HEK293 (cell line): ENCODE measurements at regions of chr7 and their contacts with region 1.

Region 1: DNA sequence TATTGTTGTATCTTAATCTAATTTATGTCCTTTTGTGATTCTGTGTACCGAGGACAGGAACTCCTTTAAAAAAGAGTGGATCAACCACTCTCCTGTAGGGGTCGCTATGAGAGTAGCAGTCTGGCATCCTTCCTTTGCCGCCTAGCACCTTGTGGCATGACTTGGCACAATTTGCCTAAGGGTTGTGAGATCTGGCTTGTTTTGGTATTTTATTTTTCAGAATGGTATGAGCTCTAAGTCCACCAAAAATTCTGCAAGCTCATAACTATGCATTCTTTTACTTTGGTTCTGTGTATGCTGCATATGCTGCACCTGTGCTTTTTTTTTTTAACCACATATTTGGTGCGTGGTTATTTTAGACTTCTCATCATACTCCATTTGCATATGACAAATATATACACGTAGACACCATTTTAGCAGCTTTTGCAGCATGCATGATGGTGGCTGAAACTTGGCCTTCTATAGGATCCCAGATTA is 112.8 kb downstream of the CDK14 start:
- H3K4me3 ChIP-seq: no peak overlapping the region
- H3K27ac ChIP-seq: no peak overlapping the region
- H3K4me1 ChIP-seq: peaks cover 24% of the 10 kb centered on the region
- CTCF ChIP-seq: peak; percentile 39; the same call in 1 of the 2 replicates

Region 2: DNA sequence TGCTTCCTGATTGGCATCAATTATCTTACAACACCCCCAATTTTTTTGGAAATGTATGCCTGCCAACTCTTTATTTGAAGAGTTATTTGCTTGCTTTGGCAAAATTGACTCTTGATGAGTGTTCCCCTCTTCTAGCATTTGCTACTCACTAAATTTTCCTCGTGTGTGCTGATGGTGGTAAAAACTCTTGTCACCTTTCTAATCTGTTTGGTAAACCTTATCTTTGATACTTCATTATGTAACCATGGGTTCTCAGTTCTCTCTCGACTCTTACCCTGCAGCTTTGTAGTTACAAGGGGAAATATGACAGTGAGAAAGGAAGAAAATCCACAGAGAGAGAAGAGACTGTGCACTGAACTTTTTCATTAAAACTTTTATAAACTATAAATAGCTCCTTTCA is 10.3 kb before region 1 on chr7:
- CTCF ChIA-PET with region 1: interaction called, 12 read pairs
- POLR2A ChIA-PET with region 1: no interaction called
- H3K4me3 ChIP-seq: no peak overlapping the region
- H3K27ac ChIP-seq: no peak overlapping the region
- H3K4me1 ChIP-seq: peaks cover 7% of the 10 kb centered on the region
- CTCF ChIP-seq: no peak

Region 3: DNA sequence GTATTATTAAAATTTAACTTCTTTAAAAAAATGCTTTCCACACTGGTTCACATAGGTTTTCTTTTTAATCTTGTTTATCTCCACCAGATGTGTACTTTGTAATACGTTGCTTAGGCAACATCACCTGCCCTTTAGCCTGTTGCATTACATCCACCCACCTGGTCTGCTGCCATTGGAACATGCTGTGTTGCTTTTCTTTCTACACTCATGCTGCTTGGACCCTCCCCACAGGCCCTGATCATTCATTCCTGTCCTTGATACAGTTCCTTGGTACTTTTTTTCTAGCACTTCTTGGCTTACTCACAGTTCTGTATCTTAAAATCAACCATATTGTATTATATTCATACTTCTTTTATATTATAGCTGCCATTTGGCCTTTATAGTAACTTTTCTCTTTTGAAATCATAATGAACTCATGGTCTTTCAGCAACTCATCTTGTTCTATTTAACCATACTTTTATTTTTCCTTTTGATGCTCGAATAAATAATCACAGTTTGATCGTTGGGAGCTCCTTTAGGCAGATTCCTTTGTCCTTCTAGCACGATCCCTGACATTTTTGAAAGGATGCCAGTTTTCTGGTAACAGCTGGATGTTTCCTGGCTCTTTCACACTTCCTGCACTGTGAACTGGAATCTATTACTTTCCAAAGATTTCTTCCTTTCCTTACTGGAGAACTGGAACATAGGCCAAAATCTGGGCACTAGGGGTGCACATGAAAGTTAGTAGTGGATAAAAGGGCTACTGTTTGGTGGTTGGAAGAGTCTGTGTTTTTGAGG is 12.3 kb after region 1 on chr7:
- CTCF ChIA-PET with region 1: interaction called, 20 read pairs
- POLR2A ChIA-PET with region 1: no interaction called
- H3K4me3 ChIP-seq: no peak overlapping the region
- H3K27ac ChIP-seq: no peak overlapping the region
- H3K4me1 ChIP-seq: peaks cover 11% of the 10 kb centered on the region
- CTCF ChIP-seq: no peak

Region 4: DNA sequence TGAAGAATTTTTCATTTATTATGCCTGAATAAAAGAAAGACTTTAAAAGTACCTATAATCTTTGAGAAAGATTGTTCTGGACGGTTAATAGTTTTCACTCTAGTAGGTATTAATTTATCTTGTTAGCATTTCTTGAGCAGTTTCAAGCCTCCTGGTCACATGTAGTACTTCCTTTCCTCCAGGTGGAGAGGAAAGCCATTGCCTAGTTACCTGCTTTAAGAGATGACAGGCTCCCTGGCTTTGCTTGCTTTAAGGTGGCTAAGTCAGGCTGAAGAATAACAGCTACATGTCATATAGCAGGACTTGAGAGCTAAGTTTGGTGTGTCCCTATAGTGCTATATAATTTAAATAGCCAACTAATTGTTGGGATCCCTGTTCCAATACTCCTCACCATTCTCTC is 47.5 kb after region 1 on chr7:
- CTCF ChIA-PET with region 1: no interaction called
- POLR2A ChIA-PET with region 1: no interaction called
- H3K4me3 ChIP-seq: no peak overlapping the region
- H3K27ac ChIP-seq: no peak overlapping the region
- H3K4me1 ChIP-seq: peaks cover 14% of the 10 kb centered on the region
- CTCF ChIP-seq: no peak

Region 5: DNA sequence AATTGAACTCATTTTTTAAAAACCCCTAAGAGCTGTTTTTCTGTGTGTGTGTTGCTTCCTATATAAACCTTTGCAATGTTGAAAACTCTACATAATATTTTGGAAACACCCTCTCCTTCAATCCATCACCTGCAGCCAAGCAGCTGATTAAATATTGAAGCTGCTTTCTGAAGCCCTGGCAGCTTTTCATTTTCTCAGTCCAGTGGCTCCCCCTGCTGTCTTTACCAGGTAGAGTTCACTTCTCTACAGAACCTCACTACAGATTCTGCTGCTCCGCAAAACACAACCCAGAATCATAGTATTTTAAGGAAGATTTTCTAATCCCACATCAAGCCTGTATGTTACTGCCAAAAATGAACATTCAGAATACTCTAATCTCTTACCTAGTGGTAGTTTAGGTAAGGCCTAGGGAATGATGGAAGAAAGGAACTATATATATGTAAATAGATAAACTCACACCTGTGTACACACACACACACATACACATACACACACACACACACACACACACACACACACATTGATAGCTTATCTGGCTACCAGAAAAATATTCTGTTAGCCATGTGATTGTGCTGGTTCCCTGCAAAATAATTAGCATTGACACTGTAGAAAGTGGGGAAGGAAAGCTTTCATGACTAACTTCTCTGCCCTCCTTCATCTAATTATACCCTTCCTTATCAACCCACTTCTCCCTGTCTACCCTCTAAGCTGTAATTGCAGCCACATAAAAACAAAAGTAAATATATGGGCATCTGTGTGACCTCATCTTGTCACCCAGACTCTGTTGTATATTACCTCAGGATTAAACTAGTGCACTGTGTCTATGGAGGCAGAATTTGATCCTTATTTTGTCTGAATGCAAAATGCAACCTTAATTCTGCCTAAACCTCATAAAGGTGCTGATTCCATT is 325.8 kb after region 1 on chr7:
- CTCF ChIA-PET with region 1: interaction called, 28 read pairs
- POLR2A ChIA-PET with region 1: no interaction called
- H3K4me3 ChIP-seq: no peak overlapping the region
- H3K27ac ChIP-seq: no peak overlapping the region
- H3K4me1 ChIP-seq: no peaks in the 10 kb centered on the region
- CTCF ChIP-seq: no peak